ENCODE measurements at regions of chrX and their contacts with region 1.

Region 1: GRCh38 chrX:133792198-133792953 is 193.0 kb downstream of the GPC3 start:
- DNase-seq: peak; percentile 2 to 19
- ATAC-seq: peak; percentile 58 to 68
- H3K4me3 ChIP-seq: peak overlapping the region in 3 of 4 donors; percentile 6 to 35 (median 14)
- H3K27ac ChIP-seq: no peak overlapping the region
- H3K4me1 ChIP-seq: no peaks in the 10 kb centered on the region
- H3K27me3 ChIP-seq: no peaks in the 10 kb centered on the region
- CTCF ChIP-seq: peak; percentile 62 to 86 (median 75)
- POLR2A ChIP-seq: no peak

Region 2: GRCh38 chrX:133468046-133468445 is 324.3 kb before region 1 on chrX:
- in situ Hi-C with region 1: no loop called
- intact Hi-C with region 1: no loop called
- DNase-seq: no peak
- ATAC-seq: no peak
- H3K4me3 ChIP-seq: no peak overlapping the region
- H3K27ac ChIP-seq: no peak overlapping the region
- H3K4me1 ChIP-seq: no peaks in the 10 kb centered on the region
- H3K27me3 ChIP-seq: no peaks in the 10 kb centered on the region
- CTCF ChIP-seq: peak in 2 of 5 experiments; percentile 8 to 33
- POLR2A ChIP-seq: no peak

Region 3: DNA sequence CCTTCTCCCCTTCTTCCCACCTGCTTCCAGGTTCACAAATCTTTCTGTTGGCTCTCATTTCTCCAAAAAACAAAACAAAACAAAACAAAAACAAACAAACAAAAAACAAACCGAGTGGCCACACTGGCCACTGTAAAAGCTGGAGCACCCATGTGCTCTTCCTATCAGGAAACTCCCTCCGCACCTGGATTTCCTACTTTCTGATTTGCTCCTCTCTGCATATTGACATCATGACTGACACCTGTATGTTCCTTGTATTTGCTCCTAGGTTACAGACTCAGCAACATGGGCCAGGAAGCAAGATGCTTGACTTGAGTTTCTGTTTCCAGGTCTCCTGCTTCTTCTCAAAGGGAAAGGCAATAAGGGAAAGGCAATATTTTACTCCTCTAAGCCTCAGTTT is 65.7 kb before region 1 on chrX:
- in situ Hi-C with region 1: no loop called
- intact Hi-C with region 1: no loop called
- DNase-seq: no peak
- ATAC-seq: no peak
- H3K4me3 ChIP-seq: no peak overlapping the region
- H3K27ac ChIP-seq: no peak overlapping the region
- H3K4me1 ChIP-seq: no peaks in the 10 kb centered on the region
- H3K27me3 ChIP-seq: no peaks in the 10 kb centered on the region
- CTCF ChIP-seq: no peak
- POLR2A ChIP-seq: no peak

Region 4: GRCh38 chrX:134377537-134377936 is 585.2 kb after region 1 on chrX:
- in situ Hi-C with region 1: loop called in 2 of 4 experiments (anchors 25 kb)
- intact Hi-C with region 1: no loop called
- DNase-seq: no peak
- ATAC-seq: no peak
- H3K4me3 ChIP-seq: no peak overlapping the region
- H3K27ac ChIP-seq: no peak overlapping the region
- H3K4me1 ChIP-seq: peaks cover 0 to 7% of the 10 kb centered on the region in 2 donors
- H3K27me3 ChIP-seq: no peaks in the 10 kb centered on the region
- CTCF ChIP-seq: no peak
- POLR2A ChIP-seq: no peak

Region 5: GRCh38 chrX:134396174-134396573 is 603.8 kb after region 1 on chrX:
- in situ Hi-C with region 1: loop called in 3 of 4 experiments (anchors 10 to 25 kb)
- intact Hi-C with region 1: loop called (anchors 5 kb)
- DNase-seq: no peak
- ATAC-seq: no peak
- H3K4me3 ChIP-seq: no peak overlapping the region
- H3K27ac ChIP-seq: no peak overlapping the region
- H3K4me1 ChIP-seq: no peaks in the 10 kb centered on the region
- H3K27me3 ChIP-seq: no peaks in the 10 kb centered on the region
- CTCF ChIP-seq: peak; percentile 19 to 60 (median 33)
- POLR2A ChIP-seq: no peak